ENCODE measurements at regions of chr13 and their contacts with region 1.

Region 1: GRCh38 chr13:32255724-32256109 is 59.4 kb downstream of the ZAR1L start:
- DNase-seq: peak; percentile 76
- H3K4me3 Mint-ChIP-seq: no peak overlapping the region
- H3K27ac Mint-ChIP-seq: no peak overlapping the region
- H3K4me1 Mint-ChIP-seq: peaks cover 19% of the 10 kb centered on the region
- H3K27me3 Mint-ChIP-seq: no peaks in the 10 kb centered on the region
- CTCF ChIP-seq: no peak

Region 2: GRCh38 chr13:32315238-32316027 is 59.7 kb after region 1 on chr13 and contains the starts of genes BRCA2 and ZAR1L:
- CTCF ChIA-PET with region 1: interaction called, 5 read pairs
- POLR2A ChIA-PET with region 1: interaction called, 15 read pairs
- intact Hi-C with region 1: no loop called
- DNase-seq: peak; percentile 86
- H3K4me3 Mint-ChIP-seq: peak within 1 kb of the TSS; percentile 90
- H3K27ac Mint-ChIP-seq: peak within 1 kb of the TSS; percentile 98
- H3K4me1 Mint-ChIP-seq: no peaks in the 10 kb centered on the region
- H3K27me3 Mint-ChIP-seq: no peaks in the 10 kb centered on the region
- CTCF ChIP-seq: no peak
- total RNA-seq, gene BRCA2: 7.9 and 11.9 TPM in 2 replicates
- total RNA-seq, gene ZAR1L: not detected in 2 replicates

Measured in MCF 10A (cell line).